ENCODE measurements at regions of chrX and their contacts with region 1.

Region 1: DNA sequence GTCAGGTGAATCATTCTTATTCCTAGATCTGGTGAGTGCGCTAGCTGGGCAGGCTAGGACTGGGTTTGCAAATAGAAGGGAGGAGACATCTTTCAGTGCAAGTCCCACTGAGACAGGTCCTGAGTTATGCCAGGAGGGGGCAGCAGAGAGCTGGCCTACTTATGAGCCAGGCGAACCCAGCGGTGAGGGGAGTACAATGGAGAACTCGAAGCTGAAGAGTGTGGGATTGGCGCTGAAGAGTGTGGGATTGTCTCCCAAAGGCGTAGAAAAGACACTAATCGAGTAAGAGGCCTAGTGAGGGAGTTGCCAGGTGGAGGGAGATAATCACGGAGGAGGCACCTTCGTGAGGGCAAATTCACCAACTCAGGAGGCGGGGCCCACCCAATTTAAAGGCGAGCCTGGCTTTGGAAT is 91.7 kb upstream of the CXorf66 start:
- DNase-seq: peak; percentile 67 to 85 (median 77)
- ATAC-seq: peak; percentile 75 to 82
- H3K4me3 ChIP-seq: no peak overlapping the region
- H3K27ac ChIP-seq: no peak overlapping the region
- H3K4me1 ChIP-seq: no peaks in the 10 kb centered on the region
- H3K27me3 ChIP-seq: no peaks in the 10 kb centered on the region

Region 2: GRCh38 chrX:140141444-140142029 is 84.5 kb after region 1 on chrX:
- intact Hi-C with region 1: loop called in 1 of 4 experiments (anchors 10 kb)
- DNase-seq: no peak
- ATAC-seq: no peak
- H3K4me3 ChIP-seq: no peak overlapping the region
- H3K27ac ChIP-seq: no peak overlapping the region
- H3K4me1 ChIP-seq: no peaks in the 10 kb centered on the region
- H3K27me3 ChIP-seq: no peaks in the 10 kb centered on the region

Region 3: DNA sequence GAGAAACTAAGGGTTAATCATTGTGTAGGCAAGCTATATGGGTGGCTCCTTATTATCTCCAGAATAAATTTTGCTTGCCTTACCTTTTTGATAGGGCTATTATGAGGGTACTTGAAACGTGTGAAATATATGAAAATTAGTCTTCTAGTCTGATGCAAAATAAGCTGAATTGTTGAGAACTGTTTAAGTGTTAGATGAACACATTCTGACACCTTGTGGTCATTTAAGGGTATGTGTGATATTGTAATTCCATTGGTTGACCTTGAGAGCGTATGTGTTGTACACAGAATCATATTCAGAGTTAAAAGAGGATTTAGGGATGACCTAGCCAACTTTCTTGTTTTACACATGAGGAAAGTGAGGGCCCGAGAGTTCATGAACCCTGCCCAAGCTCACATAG is 607.9 kb after region 1 on chrX:
- intact Hi-C with region 1: loop called in 3 of 4 experiments (anchors 5 to 10 kb)
- DNase-seq: no peak
- ATAC-seq: no peak
- H3K4me3 ChIP-seq: no peak overlapping the region
- H3K27ac ChIP-seq: no peak overlapping the region
- H3K4me1 ChIP-seq: no peaks in the 10 kb centered on the region
- H3K27me3 ChIP-seq: no peaks in the 10 kb centered on the region